ENCODE measurements at regions of chr10 and their contacts with region 1.

Region 1: GRCh38 chr10:77386838-77387237 is 250.8 kb downstream of the KCNMA1 start:
- DNase-seq: peak in 1 of 9 experiments; percentile 8
- ATAC-seq: no peak
- H3K4me3 ChIP-seq: no peak overlapping the region
- H3K4me3 Mint-ChIP-seq: peak overlapping the region; percentile 55
- H3K27ac ChIP-seq: no peak overlapping the region
- H3K27ac Mint-ChIP-seq: peak overlapping the region; percentile 20
- H3K4me1 ChIP-seq: peaks cover 20% of the 10 kb centered on the region
- H3K4me1 Mint-ChIP-seq: peaks cover 21% of the 10 kb centered on the region
- H3K27me3 ChIP-seq: no peaks in the 10 kb centered on the region
- H3K27me3 Mint-ChIP-seq: no peaks in the 10 kb centered on the region
- CTCF ChIP-seq: no peak

Region 2: GRCh38 chr10:77264107-77264506 is 122.7 kb before region 1 on chr10:
- CTCF ChIA-PET with region 1: no interaction called
- POLR2A ChIA-PET with region 1: no interaction called
- intact Hi-C with region 1: loop called in 1 of 2 experiments (anchors 5 kb)
- DNase-seq: peak in 3 of 9 experiments; percentile 51 to 71 (median 59)
- ATAC-seq: peak; percentile 63
- H3K4me3 ChIP-seq: peak overlapping the region; percentile 3 to 13
- H3K4me3 Mint-ChIP-seq: peak overlapping the region; percentile 69
- H3K27ac ChIP-seq: peak overlapping the region; percentile 4 to 61
- H3K27ac Mint-ChIP-seq: peak overlapping the region; percentile 84
- H3K4me1 ChIP-seq: peaks cover 40% of the 10 kb centered on the region
- H3K4me1 Mint-ChIP-seq: peaks cover 73% of the 10 kb centered on the region
- H3K27me3 ChIP-seq: no peaks in the 10 kb centered on the region
- H3K27me3 Mint-ChIP-seq: no peaks in the 10 kb centered on the region
- CTCF ChIP-seq: no peak

Region 3: GRCh38 chr10:77400033-77400432 is 13.2 kb after region 1 on chr10:
- CTCF ChIA-PET with region 1: interaction called, 10 read pairs
- POLR2A ChIA-PET with region 1: no interaction called
- intact Hi-C with region 1: no loop called
- DNase-seq: no peak
- ATAC-seq: no peak
- H3K4me3 ChIP-seq: no peak overlapping the region
- H3K4me3 Mint-ChIP-seq: no peak overlapping the region
- H3K27ac ChIP-seq: no peak overlapping the region
- H3K27ac Mint-ChIP-seq: no peak overlapping the region
- H3K4me1 ChIP-seq: no peaks in the 10 kb centered on the region
- H3K4me1 Mint-ChIP-seq: no peaks in the 10 kb centered on the region
- H3K27me3 ChIP-seq: no peaks in the 10 kb centered on the region
- H3K27me3 Mint-ChIP-seq: peaks cover 10% of the 10 kb centered on the region
- CTCF ChIP-seq: no peak

Region 4: DNA sequence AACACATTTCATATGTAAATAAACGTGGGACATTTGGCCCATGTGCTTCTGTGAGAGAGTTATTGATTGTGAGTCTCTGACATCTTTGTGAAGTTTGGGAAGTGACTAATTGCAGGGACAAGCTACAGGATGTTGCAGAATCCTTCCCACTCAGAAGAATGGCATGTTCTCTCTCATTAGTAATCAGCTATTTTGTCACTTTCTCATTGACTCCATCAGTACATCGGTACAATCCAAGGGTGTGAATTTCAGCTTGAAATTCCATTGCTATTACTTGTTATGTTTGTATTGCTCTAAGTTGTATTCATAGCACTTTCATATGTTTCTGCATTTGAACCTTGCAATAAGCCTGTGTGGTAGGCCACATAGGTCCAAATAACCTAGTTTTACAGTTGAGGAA is 350.8 kb after region 1 on chr10:
- CTCF ChIA-PET with region 1: no interaction called
- POLR2A ChIA-PET with region 1: no interaction called
- intact Hi-C with region 1: no loop called
- DNase-seq: no peak
- ATAC-seq: no peak
- H3K4me3 ChIP-seq: no peak overlapping the region
- H3K4me3 Mint-ChIP-seq: no peak overlapping the region
- H3K27ac ChIP-seq: no peak overlapping the region
- H3K27ac Mint-ChIP-seq: no peak overlapping the region
- H3K4me1 ChIP-seq: no peaks in the 10 kb centered on the region
- H3K4me1 Mint-ChIP-seq: no peaks in the 10 kb centered on the region
- H3K27me3 ChIP-seq: no peaks in the 10 kb centered on the region
- H3K27me3 Mint-ChIP-seq: peaks cover 8% of the 10 kb centered on the region
- CTCF ChIP-seq: no peak

Measured in CD8-positive, alpha-beta T cell (primary cell).